ENCODE measurements at regions of chr3 and their contacts with region 1.

Region 1: DNA sequence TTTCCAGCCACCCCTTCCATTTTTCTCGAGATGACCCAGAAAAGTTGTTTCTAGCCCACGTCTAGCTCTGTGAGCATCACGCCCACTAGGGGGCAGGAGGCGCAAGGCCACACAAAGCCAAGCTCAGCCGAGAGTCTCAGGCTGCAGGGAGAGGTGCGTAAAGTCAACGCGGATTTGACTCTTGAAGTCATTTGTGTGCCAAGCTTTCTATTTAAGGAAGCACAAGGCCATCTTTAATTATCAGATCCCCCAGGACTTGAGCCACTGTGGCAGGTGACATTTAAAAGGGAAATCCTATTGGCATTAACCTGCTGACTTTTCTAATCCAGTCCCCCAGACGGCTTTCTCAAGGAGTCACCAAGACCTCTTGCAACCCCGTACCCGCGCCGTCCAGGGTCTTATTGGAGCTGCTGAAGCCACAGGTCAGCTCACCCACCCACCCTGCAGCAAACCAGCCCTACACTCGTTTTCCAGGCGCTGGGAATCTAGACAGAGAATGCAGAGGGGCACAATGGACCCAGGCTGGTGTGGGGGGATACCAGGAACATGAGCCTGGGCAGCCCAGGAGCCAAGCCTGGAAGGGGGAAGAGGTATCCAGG is 62.1 kb downstream of the CAPN7 start:
- DNase-seq: peak; percentile 77 to 91 (median 80)
- H3K4me3 ChIP-seq: no peak overlapping the region
- H3K4me3 Mint-ChIP-seq: peak overlapping the region in 6 of 7 donors; percentile 34 to 68 (median 50)
- H3K27ac ChIP-seq: no peak overlapping the region
- H3K27ac Mint-ChIP-seq: peak overlapping the region; percentile 32 to 87 (median 74)
- H3K4me1 ChIP-seq: peaks cover 79% of the 10 kb centered on the region
- H3K4me1 Mint-ChIP-seq: peaks cover 75 to 91% (median 90%) of the 10 kb centered on the region in 3 donors
- H3K27me3 ChIP-seq: no peaks in the 10 kb centered on the region
- H3K27me3 Mint-ChIP-seq: no peaks in the 10 kb centered on the region

Region 2: GRCh38 chr3:15256861-15257341 is 11.2 kb before region 1 on chr3:
- CTCF ChIA-PET with region 1: interaction called, 33 read pairs
- POLR2A ChIA-PET with region 1: no interaction called
- DNase-seq: no peak
- H3K4me3 ChIP-seq: no peak overlapping the region
- H3K4me3 Mint-ChIP-seq: no peak overlapping the region
- H3K27ac ChIP-seq: no peak overlapping the region
- H3K27ac Mint-ChIP-seq: peak overlapping the region; percentile 2 to 92 (median 69)
- H3K4me1 ChIP-seq: no peaks in the 10 kb centered on the region
- H3K4me1 Mint-ChIP-seq: peaks cover 7 to 29% (median 23%) of the 10 kb centered on the region in 3 donors
- H3K27me3 ChIP-seq: no peaks in the 10 kb centered on the region
- H3K27me3 Mint-ChIP-seq: no peaks in the 10 kb centered on the region

Region 3: DNA sequence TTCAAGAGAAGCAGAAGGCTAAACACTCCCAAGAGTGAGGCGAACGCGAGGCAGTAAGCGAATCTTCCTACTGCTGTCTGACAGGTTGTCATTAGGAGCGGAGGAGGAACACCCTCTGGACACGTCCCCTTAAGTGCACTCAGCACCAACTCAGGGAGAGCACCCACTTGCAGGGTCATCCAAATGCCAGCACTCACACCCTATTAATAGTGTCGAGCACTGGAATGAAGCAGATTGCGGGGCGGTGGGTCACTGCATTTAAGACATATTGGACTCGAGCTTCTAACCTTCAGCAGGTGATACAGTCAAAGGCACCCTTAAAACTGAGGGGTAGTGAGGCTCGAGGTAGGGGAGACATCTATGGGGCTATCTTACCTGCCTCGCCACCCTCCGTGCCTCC is 35.6 kb after region 1 on chr3:
- CTCF ChIA-PET with region 1: interaction called, 11 read pairs
- POLR2A ChIA-PET with region 1: interaction called, 4 read pairs
- DNase-seq: no peak
- H3K4me3 ChIP-seq: peak overlapping the region; percentile 42
- H3K4me3 Mint-ChIP-seq: peak overlapping the region; percentile 81 to 96 (median 91)
- H3K27ac ChIP-seq: peak overlapping the region; percentile 12
- H3K27ac Mint-ChIP-seq: peak overlapping the region; percentile 82 to 97 (median 94)
- H3K4me1 ChIP-seq: peaks cover 82% of the 10 kb centered on the region
- H3K4me1 Mint-ChIP-seq: peaks cover 65 to 85% (median 83%) of the 10 kb centered on the region in 3 donors
- H3K27me3 ChIP-seq: no peaks in the 10 kb centered on the region
- H3K27me3 Mint-ChIP-seq: no peaks in the 10 kb centered on the region

Region 4: DNA sequence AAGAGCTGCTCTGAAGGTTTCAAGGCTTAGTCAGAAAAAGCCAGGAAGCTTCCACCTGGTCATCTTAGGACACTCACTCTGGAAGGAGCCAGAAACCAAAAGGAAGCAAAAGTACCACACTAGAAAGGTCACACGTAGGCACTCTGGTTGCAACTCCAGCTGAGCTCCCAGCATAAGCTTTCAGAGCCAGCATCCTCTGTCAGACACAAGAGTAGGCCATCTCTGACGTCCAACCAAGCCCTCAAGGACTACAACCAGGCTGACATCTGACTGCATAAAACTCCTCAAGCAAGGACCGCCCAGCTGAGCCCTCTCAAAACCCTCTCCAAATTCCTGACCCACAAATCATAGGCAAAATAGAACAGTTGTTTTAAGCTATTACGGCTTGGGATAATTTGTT is 51.4 kb after region 1 on chr3:
- CTCF ChIA-PET with region 1: interaction called, 11 read pairs
- POLR2A ChIA-PET with region 1: interaction called, 3 read pairs
- DNase-seq: no peak
- H3K4me3 ChIP-seq: no peak overlapping the region
- H3K4me3 Mint-ChIP-seq: peak overlapping the region in 3 of 7 donors; percentile 11 to 35 (median 22)
- H3K27ac ChIP-seq: no peak overlapping the region
- H3K27ac Mint-ChIP-seq: peak overlapping the region in 5 of 8 donors; percentile 1 to 74 (median 23)
- H3K4me1 ChIP-seq: peaks cover 71% of the 10 kb centered on the region
- H3K4me1 Mint-ChIP-seq: peaks cover 75 to 83% (median 83%) of the 10 kb centered on the region in 3 donors
- H3K27me3 ChIP-seq: no peaks in the 10 kb centered on the region
- H3K27me3 Mint-ChIP-seq: peaks cover 0 to 1% of the 10 kb centered on the region in 2 donors

Region 5: DNA sequence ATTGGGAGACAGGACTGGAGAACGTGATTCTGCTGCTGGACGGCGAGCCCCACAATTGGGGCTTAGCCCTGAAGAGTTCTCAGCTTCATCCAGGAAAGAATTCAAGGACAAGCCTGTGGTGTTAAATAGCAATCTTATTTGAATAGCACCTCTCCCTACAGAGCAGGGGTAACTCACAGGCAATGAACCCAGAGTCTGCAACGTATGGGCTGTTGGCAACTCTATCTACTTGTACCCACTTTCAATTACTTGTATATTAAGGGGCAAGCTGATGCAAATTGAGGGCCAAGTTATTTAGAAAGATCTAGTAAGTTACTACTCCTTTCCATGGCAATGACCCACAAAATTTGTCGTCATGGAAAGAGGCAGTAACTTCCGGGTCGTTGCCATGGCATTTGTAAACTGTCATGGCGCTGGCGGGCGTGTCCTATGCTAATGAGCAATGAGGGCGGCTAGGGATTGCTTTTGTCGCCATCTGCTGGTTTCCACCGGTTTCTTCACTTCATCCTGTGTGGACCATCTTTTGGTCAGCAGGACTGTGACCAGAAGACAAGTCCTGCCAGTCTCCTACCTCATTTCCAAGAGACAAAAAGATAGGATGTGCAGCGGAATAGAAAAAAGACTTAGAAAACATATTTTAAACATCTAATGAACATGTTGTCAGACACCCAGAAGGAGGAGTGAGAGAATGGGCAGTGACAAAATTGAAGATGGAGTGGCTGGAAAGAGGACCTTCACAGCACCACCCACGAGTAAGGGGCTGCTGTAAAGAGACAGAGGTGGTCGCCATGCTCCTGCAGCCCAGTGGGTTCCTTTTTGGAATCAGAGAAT is 110.0 kb after region 1 on chr3:
- CTCF ChIA-PET with region 1: interaction called, 106 read pairs
- POLR2A ChIA-PET with region 1: no interaction called
- DNase-seq: peak; percentile 89 to 98 (median 92)
- H3K4me3 ChIP-seq: no peak overlapping the region
- H3K4me3 Mint-ChIP-seq: peak overlapping the region in 2 of 7 donors; percentile 30 to 40
- H3K27ac ChIP-seq: peak overlapping the region; percentile 85
- H3K27ac Mint-ChIP-seq: peak overlapping the region; percentile 84 to 98 (median 94)
- H3K4me1 ChIP-seq: peaks cover 5% of the 10 kb centered on the region
- H3K4me1 Mint-ChIP-seq: peaks cover 7 to 9% (median 8%) of the 10 kb centered on the region in 3 donors
- H3K27me3 ChIP-seq: no peaks in the 10 kb centered on the region
- H3K27me3 Mint-ChIP-seq: no peaks in the 10 kb centered on the region